Naive thymus-derived CD4-positive, alpha-beta T cell (primary cell): ENCODE measurements at regions of chr17 and their contacts with region 1.

Region 1: DNA sequence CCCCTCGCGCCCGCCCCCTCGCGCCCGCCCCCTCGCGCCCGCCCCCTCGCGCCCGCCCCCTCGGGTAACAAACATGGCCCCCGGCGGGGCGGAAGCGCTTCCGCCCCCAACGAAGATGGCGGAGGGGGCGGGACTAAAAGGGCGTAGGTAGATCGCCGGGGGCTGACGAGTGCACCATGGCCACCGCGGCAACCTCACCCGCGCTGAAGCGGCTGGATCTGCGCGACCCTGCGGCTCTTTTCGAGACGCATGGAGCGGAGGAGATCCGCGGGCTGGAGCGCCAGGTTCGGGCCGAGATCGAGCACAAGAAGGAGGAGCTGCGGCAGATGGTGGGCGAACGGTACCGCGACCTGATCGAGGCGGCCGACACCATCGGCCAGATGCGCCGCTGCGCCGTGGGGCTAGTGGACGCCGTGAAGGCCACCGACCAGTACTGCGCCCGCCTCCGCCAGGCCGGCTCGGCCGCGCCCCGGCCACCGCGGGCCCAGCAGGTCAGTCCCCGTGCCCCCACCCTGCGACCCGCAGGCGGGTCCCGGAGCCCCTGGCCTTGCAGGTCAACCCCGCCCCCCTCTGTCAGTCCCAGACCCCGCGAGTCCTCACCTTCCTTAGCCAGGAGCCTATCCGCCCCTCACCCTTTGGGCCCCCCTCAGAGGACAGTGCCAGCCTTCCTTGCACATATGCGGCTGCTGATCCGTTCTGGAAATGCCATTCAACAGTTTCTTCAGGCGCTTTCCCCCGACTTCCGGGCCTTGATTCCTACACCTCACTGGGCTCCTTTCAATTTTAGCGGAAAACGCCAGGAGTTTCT is at the start of gene COG1:
- DNase-seq: peak; percentile 59 to 90 (median 70)
- ATAC-seq: peak; percentile 92
- H3K4me3 ChIP-seq: peak within 1 kb of the TSS; percentile 97
- H3K4me3 Mint-ChIP-seq: peak within 1 kb of the TSS; percentile 92 to 100 (median 96)
- H3K27ac ChIP-seq: peak within 1 kb of the TSS; percentile 91
- H3K27ac Mint-ChIP-seq: peak within 1 kb of the TSS; percentile 93 to 98 (median 97)
- H3K4me1 ChIP-seq: peaks cover 14 to 18% of the 10 kb centered on the region in 2 donors
- H3K4me1 Mint-ChIP-seq: peaks cover 17 to 47% (median 38%) of the 10 kb centered on the region in 7 donors
- H3K27me3 ChIP-seq: no peaks in the 10 kb centered on the region
- H3K27me3 Mint-ChIP-seq: no peaks in the 10 kb centered on the region
- total RNA-seq, gene COG1: 35.0 to 92.7 (median 85.8) TPM

Region 2: GRCh38 chr17:72592242-72592966 is 600.7 kb before region 1 on chr17:
- CTCF ChIA-PET with region 1: no interaction called
- POLR2A ChIA-PET with region 1: no interaction called
- intact Hi-C with region 1: loop called in 1 of 2 experiments (anchors 2 kb)
- DNase-seq: peak in 5 of 9 donors; percentile 6 to 77 (median 37)
- ATAC-seq: peak; percentile 79
- H3K4me3 ChIP-seq: peak overlapping the region; percentile 35
- H3K4me3 Mint-ChIP-seq: peak overlapping the region; percentile 78 to 97 (median 86)
- H3K27ac ChIP-seq: no peak overlapping the region
- H3K27ac Mint-ChIP-seq: peak overlapping the region in 3 of 9 donors; percentile 33 to 71 (median 50)
- H3K4me1 ChIP-seq: peaks cover 6 to 10% of the 10 kb centered on the region in 2 donors
- H3K4me1 Mint-ChIP-seq: peaks cover 13 to 33% (median 25%) of the 10 kb centered on the region in 7 donors
- H3K27me3 ChIP-seq: no peaks in the 10 kb centered on the region
- H3K27me3 Mint-ChIP-seq: peaks cover 46 to 66% (median 53%) of the 10 kb centered on the region in 5 donors

Region 3: DNA sequence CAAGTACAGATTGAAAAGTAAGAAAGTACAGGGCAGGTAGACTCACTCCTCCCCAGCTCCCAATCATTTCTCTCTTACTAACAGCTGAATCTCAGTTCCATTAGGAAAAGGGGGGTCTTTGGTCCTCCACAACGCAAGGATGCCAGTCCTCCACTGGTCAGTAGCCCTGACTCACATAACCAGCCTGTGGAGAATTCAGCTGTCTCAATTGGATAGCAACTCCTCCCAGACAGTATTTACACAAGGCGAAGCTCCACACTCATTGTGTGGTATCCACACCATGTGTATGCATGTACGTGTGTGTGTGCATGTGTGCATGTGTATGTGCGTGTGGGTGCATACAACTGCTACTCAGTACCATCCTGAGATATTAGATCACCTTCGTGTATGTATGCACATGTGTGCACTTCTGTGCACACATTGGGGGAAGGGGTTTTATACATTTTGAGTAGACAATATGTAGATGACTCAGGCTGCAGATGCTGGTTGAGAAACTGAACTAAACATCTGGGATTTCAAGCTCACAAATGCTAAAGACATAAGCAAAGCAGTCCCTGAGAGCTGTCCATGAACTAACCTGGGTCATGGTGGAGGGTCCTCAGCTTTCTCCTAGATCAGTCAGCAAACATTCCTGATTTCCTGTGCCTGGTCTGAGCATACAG is 340.7 kb before region 1 on chr17:
- CTCF ChIA-PET with region 1: no interaction called
- POLR2A ChIA-PET with region 1: no interaction called
- intact Hi-C with region 1: no loop called
- DNase-seq: no peak
- ATAC-seq: no peak
- H3K4me3 ChIP-seq: no peak overlapping the region
- H3K4me3 Mint-ChIP-seq: no peak overlapping the region
- H3K27ac ChIP-seq: no peak overlapping the region
- H3K27ac Mint-ChIP-seq: no peak overlapping the region
- H3K4me1 ChIP-seq: no peaks in the 10 kb centered on the region
- H3K4me1 Mint-ChIP-seq: no peaks in the 10 kb centered on the region
- H3K27me3 ChIP-seq: no peaks in the 10 kb centered on the region
- H3K27me3 Mint-ChIP-seq: no peaks in the 10 kb centered on the region

Region 4: DNA sequence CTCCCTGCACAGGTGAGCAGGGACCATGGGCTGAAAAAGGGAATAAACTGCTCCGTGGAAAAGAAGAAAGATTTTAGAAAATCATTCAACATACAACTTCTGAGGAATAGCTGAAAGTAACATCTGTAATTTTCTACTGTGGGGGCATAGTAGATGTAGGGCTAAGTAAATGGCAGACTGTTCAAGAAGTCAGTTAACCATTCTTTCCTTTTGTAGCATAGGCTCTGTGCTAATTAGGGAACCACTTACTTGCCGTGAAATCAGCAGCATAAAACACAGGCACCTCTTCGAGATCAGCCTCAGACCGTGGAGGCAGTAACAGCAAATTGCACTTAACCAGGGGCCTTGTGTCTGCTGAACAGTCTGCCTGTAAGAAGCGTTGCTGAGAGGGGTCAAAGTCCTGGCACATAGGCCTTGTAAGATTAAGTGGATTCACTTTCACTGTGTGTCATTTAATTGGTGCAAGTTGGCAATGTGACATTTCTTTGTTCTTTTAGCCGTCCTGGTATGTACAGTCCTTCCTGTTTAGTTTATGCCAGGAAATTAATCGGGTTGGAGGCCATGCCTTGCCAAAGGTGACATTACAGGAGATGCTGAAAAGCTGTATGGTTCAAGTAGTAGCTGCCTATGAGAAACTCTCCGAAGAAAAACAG is 10.2 kb after region 1 on chr17:
- CTCF ChIA-PET with region 1: no interaction called
- POLR2A ChIA-PET with region 1: interaction called, 6 read pairs
- intact Hi-C with region 1: loop called (anchors 1 kb)
- DNase-seq: peak in 5 of 9 donors; percentile 19 to 41 (median 21)
- ATAC-seq: peak; percentile 60
- H3K4me3 ChIP-seq: no peak overlapping the region
- H3K4me3 Mint-ChIP-seq: peak overlapping the region; percentile 4 to 69 (median 56)
- H3K27ac ChIP-seq: peak overlapping the region; percentile 59
- H3K27ac Mint-ChIP-seq: peak overlapping the region; percentile 58 to 94 (median 88)
- H3K4me1 ChIP-seq: peaks cover 6 to 20% of the 10 kb centered on the region in 2 donors
- H3K4me1 Mint-ChIP-seq: peaks cover 17 to 39% (median 27%) of the 10 kb centered on the region in 7 donors
- H3K27me3 ChIP-seq: no peaks in the 10 kb centered on the region
- H3K27me3 Mint-ChIP-seq: no peaks in the 10 kb centered on the region

Region 5: GRCh38 chr17:73231841-73232586 is 38.9 kb after region 1 on chr17:
- CTCF ChIA-PET with region 1: interaction called, 9 read pairs
- POLR2A ChIA-PET with region 1: interaction called, 30 read pairs
- intact Hi-C with region 1: loop called (anchors 1 kb)
- DNase-seq: peak; percentile 93 to 99 (median 96)
- ATAC-seq: peak; percentile 98
- H3K4me3 ChIP-seq: peak overlapping the region; percentile 87
- H3K4me3 Mint-ChIP-seq: peak overlapping the region; percentile 90 to 98 (median 95)
- H3K27ac ChIP-seq: peak overlapping the region; percentile 86
- H3K27ac Mint-ChIP-seq: peak overlapping the region; percentile 92 to 98 (median 96)
- H3K4me1 ChIP-seq: peaks cover 20 to 32% of the 10 kb centered on the region in 2 donors
- H3K4me1 Mint-ChIP-seq: peaks cover 52 to 81% (median 70%) of the 10 kb centered on the region in 7 donors
- H3K27me3 ChIP-seq: no peaks in the 10 kb centered on the region
- H3K27me3 Mint-ChIP-seq: no peaks in the 10 kb centered on the region

Region 6: DNA sequence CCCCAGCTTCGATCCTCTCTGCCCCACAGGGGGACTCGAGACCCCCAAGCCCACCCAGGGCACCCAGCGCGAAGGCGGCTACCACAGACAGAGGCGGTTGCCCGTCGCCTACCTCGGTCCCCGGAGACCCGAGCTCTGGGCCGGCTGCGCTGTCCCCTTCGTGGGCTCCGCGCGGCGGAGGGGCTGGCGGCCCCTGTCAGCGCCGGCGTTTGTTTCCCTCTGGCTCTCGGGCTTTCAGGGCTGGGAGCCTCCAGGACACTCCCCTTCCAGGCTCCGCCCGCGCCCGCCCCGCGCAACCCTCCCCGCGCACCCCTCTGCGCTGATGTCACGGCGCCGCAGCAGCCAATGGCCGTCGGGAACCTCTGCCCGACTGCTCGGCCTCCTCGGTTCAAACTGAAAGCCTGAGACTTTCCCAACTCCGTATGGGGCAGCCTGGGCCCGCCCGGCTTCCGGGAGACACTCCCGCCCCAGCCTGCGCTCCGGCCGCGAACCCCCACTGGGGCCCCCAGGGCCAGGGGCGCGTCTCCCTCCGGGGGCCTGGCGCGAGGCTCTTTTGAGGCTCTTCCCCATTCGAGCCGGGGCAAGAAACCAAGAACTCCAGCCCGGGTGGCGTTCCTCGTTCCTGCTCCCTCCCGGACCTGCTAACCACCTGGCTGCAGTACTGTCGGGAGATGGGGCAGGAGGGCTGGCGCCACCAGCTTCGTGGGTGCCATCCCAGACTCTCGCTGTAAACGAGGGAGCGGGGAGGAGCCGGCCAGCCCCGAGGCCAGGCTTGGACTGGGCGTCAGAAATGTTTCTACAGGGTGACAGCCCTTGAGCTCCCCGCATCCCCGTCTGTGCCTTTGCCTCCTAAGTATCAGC is 118.9 kb after region 1 on chr17 and contains the start of gene CDC42EP4:
- CTCF ChIA-PET with region 1: no interaction called
- POLR2A ChIA-PET with region 1: interaction called, 3 read pairs
- intact Hi-C with region 1: loop called (anchors 1 kb)
- DNase-seq: peak; percentile 70 to 89 (median 76)
- ATAC-seq: peak; percentile 94
- H3K4me3 ChIP-seq: peak within 1 kb of the TSS; percentile 80
- H3K4me3 Mint-ChIP-seq: peak within 1 kb of the TSS; percentile 84 to 91 (median 88)
- H3K27ac ChIP-seq: peak within 1 kb of the TSS; percentile 75
- H3K27ac Mint-ChIP-seq: peak within 1 kb of the TSS in 8 of 9 donors; percentile 5 to 86 (median 62)
- H3K4me1 ChIP-seq: peaks cover 9 to 10% of the 10 kb centered on the region in 2 donors
- H3K4me1 Mint-ChIP-seq: peaks cover 8 to 19% (median 13%) of the 10 kb centered on the region in 7 donors
- H3K27me3 ChIP-seq: no peaks in the 10 kb centered on the region
- H3K27me3 Mint-ChIP-seq: peaks cover 0 to 13% (median 0%) of the 10 kb centered on the region in 5 donors
- total RNA-seq, gene CDC42EP4: 1.4 to 15.8 (median 2.0) TPM

Region 7: DNA sequence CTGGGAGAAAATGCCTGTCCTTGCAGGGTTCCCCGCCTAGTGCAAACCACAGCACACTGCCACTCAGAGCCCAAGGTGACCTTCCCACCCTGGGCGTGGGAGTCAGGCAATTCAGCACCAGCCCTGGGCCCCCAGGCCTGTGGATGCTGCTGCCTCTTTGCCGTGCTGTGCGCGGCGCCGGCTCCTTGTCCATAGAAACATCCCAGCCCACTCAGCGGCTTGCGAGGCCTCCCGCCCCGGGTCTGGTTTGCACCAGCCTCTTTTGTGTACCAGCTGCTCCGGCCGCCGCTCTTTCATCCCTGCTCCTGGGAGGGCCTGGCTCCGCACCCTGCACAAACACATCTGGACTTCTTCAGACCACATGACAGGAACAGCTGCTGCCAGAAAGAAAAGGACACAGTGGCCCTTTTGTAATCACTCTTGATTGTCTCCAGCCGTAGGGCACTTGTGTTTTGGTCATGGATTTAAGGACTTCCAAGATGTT is 526.5 kb after region 1 on chr17:
- CTCF ChIA-PET with region 1: no interaction called
- POLR2A ChIA-PET with region 1: no interaction called
- intact Hi-C with region 1: loop called in 1 of 2 experiments (anchors 5 kb)
- DNase-seq: no peak
- ATAC-seq: no peak
- H3K4me3 ChIP-seq: no peak overlapping the region
- H3K4me3 Mint-ChIP-seq: peak overlapping the region in 4 of 10 donors; percentile 30 to 69 (median 59)
- H3K27ac ChIP-seq: no peak overlapping the region
- H3K27ac Mint-ChIP-seq: peak overlapping the region in 7 of 9 donors; percentile 48 to 98 (median 82)
- H3K4me1 ChIP-seq: peaks cover 18 to 45% of the 10 kb centered on the region in 2 donors
- H3K4me1 Mint-ChIP-seq: peaks cover 20 to 66% (median 57%) of the 10 kb centered on the region in 7 donors
- H3K27me3 ChIP-seq: no peaks in the 10 kb centered on the region
- H3K27me3 Mint-ChIP-seq: peaks cover 0 to 7% (median 0%) of the 10 kb centered on the region in 5 donors